Aorta (tissue), 5 donors: ENCODE measurements at regions of chr6 and their contacts with region 1.

Region 1: GRCh38 chr6:96542702-96543101 is 20.2 kb upstream of the FHL5 start:
- DNase-seq: no peak
- ATAC-seq: peak; percentile 41
- H3K4me3 ChIP-seq: no peak overlapping the region
- H3K27ac ChIP-seq: no peak overlapping the region
- H3K4me1 ChIP-seq: no peaks in the 10 kb centered on the region
- H3K27me3 ChIP-seq: no peaks in the 10 kb centered on the region

Region 2: GRCh38 chr6:96575359-96575758 is 32.7 kb after region 1 on chr6:
- intact Hi-C with region 1: no loop called
- DNase-seq: no peak
- ATAC-seq: peak; percentile 51
- H3K4me3 ChIP-seq: no peak overlapping the region
- H3K27ac ChIP-seq: peak overlapping the region; percentile 17 to 33
- H3K4me1 ChIP-seq: peaks cover 0 to 1% of the 10 kb centered on the region in 2 donors
- H3K27me3 ChIP-seq: no peaks in the 10 kb centered on the region

Region 3: DNA sequence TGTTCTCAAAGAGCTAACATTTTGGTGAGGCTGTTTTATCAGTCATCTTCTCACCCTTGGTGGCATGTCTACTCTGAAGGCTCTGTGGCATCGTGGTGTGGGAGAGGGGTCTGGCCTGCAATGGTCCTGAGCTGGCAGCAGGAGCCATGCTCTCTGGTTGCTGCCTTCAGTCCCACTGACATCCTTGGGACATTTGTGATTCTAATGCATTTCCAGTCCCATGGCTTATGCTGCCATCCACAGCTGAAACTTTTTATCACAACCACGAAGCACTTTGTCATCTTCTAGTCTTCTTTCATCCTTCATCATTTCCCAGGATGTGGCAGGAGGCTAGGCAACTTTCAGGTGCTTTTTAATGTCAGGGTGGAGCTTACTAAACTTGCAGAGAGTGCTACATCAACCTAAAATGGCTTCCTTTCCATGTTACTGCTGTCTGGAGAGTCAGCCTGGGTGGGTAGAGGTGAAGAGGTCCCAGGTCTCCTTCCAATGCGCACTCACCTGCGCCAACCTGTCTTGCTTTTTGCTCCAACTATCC is 217.5 kb after region 1 on chr6:
- intact Hi-C with region 1: loop called in 1 of 2 experiments (anchors 5 kb)
- DNase-seq: no peak
- ATAC-seq: no peak
- H3K4me3 ChIP-seq: no peak overlapping the region
- H3K27ac ChIP-seq: no peak overlapping the region
- H3K4me1 ChIP-seq: peaks cover 0 to 2% of the 10 kb centered on the region in 2 donors
- H3K27me3 ChIP-seq: no peaks in the 10 kb centered on the region

Region 4: GRCh38 chr6:96864216-96865054 is 321.7 kb after region 1 on chr6:
- intact Hi-C with region 1: no loop called
- DNase-seq: no peak
- ATAC-seq: no peak
- H3K4me3 ChIP-seq: no peak overlapping the region
- H3K27ac ChIP-seq: no peak overlapping the region
- H3K4me1 ChIP-seq: no peaks in the 10 kb centered on the region
- H3K27me3 ChIP-seq: no peaks in the 10 kb centered on the region

Region 5: GRCh38 chr6:97053643-97054411 is 511.1 kb after region 1 on chr6:
- intact Hi-C with region 1: loop called (anchors 5 kb)
- DNase-seq: no peak
- ATAC-seq: no peak
- H3K4me3 ChIP-seq: no peak overlapping the region
- H3K27ac ChIP-seq: no peak overlapping the region
- H3K4me1 ChIP-seq: no peaks in the 10 kb centered on the region
- H3K27me3 ChIP-seq: no peaks in the 10 kb centered on the region